Activated naive CD8-positive, alpha-beta T cell treated with anti-CD3 and anti-CD28 coated beads, Interleukin-2, amount 10 ng/mL, durations not matched to agents 7 days and 5 days (primary cell): ENCODE measurements at regions of chr2 and their contacts with region 1.

Region 1: DNA sequence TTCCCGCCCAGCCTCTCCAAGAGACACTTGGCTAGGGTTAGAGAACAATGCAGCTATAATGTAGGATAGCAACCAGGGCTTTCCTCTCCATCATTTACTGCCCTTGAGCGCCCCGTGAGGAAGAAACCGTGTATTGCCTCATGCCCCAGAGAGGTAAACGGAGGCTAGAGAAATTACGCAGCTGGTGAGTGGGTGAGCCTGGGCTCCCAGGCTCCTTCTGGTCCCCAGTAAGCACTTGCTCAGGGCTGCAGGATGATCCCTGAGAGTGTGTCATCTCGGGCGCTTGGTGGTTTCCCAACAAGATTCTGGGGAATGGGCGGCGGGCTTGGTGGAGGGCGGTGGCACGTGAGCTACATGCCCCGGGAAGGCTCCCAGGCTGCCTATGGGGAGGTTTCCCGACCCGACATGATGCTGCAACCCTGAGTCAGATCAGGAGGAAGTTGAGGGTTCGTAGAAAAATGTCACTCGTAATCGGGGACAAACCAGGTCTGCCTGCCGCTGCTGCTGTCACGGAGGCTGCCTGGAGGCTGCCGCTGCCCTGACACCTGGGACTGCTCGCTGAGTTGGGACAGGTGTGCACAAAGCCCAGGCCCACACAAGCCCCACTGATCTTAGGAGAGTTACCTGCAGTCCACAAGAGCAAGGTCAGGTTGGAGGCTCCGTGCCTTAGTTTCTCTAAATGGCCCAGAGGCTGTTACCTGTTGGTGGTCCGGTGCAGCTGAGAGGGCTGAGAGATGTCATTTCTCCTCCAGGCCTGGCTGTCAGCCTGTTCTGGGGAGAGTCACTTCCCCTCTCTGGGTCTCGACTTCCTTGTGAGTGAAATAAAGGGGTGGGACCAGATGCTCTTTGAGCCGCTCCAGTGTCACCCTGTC is at the start of gene GPR55:
- DNase-seq: peak; percentile 71
- ATAC-seq: peak; percentile 75
- H3K4me3 Mint-ChIP-seq: peak within 1 kb of the TSS; percentile 90
- H3K27ac Mint-ChIP-seq: peak within 1 kb of the TSS; percentile 98
- H3K4me1 Mint-ChIP-seq: peaks cover 57% of the 10 kb centered on the region
- H3K27me3 Mint-ChIP-seq: no peaks in the 10 kb centered on the region
- total RNA-seq, gene GPR55: 18.8 to 21.5 TPM

Region 2: GRCh38 chr2:230793572-230794359 is 130.9 kb before region 1 on chr2:
- POLR2A ChIA-PET with region 1: no interaction called
- DNase-seq: peak; percentile 49
- ATAC-seq: peak; percentile 86
- H3K4me3 Mint-ChIP-seq: peak overlapping the region; percentile 77
- H3K27ac Mint-ChIP-seq: peak overlapping the region; percentile 87
- H3K4me1 Mint-ChIP-seq: peaks cover 32% of the 10 kb centered on the region
- H3K27me3 Mint-ChIP-seq: no peaks in the 10 kb centered on the region

Region 3: DNA sequence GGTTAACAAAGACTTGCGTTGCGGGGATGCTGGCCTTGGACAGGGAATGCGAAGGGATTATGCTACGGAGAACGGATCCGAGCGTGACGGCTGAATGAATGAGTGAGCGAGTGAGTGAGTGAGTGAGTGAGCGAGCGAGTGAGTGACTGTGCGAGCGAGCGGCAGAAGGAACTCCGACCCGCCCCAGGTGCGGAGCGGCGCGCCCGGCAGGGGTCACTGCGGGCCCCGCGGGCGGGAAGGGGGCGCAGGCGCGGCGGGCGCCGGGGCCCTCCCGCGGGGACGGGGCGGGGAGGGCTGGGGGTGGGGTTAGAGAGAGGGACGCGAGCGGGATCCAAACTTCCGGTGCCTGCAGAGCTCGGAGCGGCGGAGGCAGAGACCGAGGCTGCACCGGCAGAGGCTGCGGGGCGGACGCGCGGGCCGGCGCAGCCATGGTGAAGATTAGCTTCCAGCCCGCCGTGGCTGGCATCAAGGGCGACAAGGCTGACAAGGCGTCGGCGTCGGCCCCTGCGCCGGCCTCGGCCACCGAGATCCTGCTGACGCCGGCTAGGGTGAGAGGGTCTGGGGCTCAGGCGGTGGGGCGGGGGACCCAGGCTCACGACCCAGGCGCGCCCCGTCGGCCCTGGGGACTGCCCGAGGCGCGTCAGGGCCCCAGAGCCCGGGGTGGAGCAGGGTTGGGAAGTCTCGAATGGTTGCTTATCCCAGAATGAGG is 60.0 kb before region 1 on chr2 and contains the start of gene ITM2C:
- POLR2A ChIA-PET with region 1: interaction called, 10 read pairs
- DNase-seq: peak; percentile 86
- ATAC-seq: peak; percentile 80
- H3K4me3 Mint-ChIP-seq: peak within 1 kb of the TSS; percentile 90
- H3K27ac Mint-ChIP-seq: peak within 1 kb of the TSS; percentile 84
- H3K4me1 Mint-ChIP-seq: peaks cover 44% of the 10 kb centered on the region
- H3K27me3 Mint-ChIP-seq: peaks cover 6% of the 10 kb centered on the region
- total RNA-seq, gene ITM2C: 102 to 105 TPM

Region 4: DNA sequence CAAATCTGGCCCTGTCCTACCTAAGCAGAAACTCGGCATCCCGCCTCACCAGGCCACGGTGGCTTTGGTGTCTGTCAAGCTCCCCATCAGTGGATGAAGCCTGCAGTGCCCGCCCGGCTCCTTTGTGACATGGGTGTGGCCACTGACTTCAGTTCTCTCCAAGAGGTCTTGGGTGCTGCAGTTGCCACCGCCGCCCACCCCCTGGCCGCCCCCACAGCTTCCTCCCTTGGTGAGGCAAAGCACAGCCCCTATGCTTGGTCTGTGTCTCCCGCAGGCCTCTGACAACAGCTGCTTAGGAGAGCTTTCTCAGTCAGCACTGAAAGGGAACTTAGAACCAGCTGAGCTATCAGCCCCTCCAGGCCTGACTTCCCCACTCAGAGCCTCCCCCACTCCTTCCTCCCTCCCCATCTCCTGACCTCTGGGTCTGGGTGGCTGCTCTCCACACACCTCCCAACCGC is 23.2 kb after region 1 on chr2:
- POLR2A ChIA-PET with region 1: interaction called, 13 read pairs
- DNase-seq: no peak
- ATAC-seq: no peak
- H3K4me3 Mint-ChIP-seq: no peak overlapping the region
- H3K27ac Mint-ChIP-seq: no peak overlapping the region
- H3K4me1 Mint-ChIP-seq: peaks cover 17% of the 10 kb centered on the region
- H3K27me3 Mint-ChIP-seq: no peaks in the 10 kb centered on the region

Region 5: GRCh38 chr2:230956827-230957755 is 32.4 kb after region 1 on chr2:
- POLR2A ChIA-PET with region 1: interaction called, 10 read pairs
- DNase-seq: peak; percentile 64
- ATAC-seq: peak; percentile 81
- H3K4me3 Mint-ChIP-seq: peak overlapping the region; percentile 87
- H3K27ac Mint-ChIP-seq: peak overlapping the region; percentile 97
- H3K4me1 Mint-ChIP-seq: peaks cover 38% of the 10 kb centered on the region
- H3K27me3 Mint-ChIP-seq: no peaks in the 10 kb centered on the region